ENCODE measurements at regions of chrX and their contacts with region 1.

Region 1: GRCh38 chrX:46978341-46979291 is 66.4 kb downstream of the JADE3 start:
- DNase-seq: peak; percentile 76 to 80
- H3K4me3 ChIP-seq: no peak overlapping the region
- H3K4me3 Mint-ChIP-seq: no peak overlapping the region
- H3K27ac Mint-ChIP-seq: no peak overlapping the region
- H3K4me1 ChIP-seq: peaks cover 3% of the 10 kb centered on the region; the same call in 1 of the 2 replicates
- H3K4me1 Mint-ChIP-seq: no peaks in the 10 kb centered on the region
- H3K27me3 ChIP-seq: no peaks in the 10 kb centered on the region
- H3K27me3 Mint-ChIP-seq: no peaks in the 10 kb centered on the region
- CTCF ChIP-seq: peak; percentile 63 to 70

Region 2: DNA sequence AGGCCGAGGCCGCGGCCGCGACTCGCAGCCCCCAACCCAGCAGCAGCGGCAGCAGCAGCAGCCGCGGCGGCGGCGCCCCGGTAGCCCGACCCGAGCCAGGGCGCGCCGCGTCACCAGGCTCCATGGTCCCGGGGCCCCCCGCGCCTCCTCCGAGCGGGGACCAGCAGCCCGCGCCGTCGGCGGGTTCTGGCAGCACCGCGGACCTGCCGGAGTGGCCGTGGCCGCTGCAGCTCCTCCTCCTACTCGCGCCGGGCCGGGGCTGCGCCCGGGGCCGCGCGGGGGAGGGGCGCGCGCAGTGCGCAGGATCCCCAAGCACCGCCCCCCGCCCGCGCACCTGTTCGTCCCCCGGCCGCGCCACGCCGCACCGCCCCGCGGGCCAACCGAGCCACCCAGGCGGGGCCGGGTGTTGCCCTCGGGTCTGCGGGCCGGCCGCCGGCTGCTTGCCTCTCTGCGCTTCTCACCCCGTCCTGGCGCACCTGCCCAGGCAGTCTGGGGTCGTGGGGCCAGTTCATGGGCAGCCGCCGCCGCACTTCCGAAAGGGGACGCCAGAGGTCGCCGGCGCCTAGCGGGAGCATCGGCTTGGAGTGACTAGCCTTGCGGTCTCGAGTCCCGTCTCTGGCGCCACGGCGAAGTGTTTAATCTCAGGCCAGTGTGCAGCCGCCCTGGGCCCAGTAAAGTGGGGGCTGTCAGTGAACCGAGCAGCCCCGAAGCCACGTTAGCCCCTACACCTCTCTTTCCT is 219.5 kb before region 1 on chrX and contains the start of gene SLC9A7:
- CTCF ChIA-PET with region 1: no interaction called
- POLR2A ChIA-PET with region 1: no interaction called
- intact Hi-C with region 1: loop called (anchors 5 kb)
- DNase-seq: peak; percentile 82 to 90
- H3K4me3 ChIP-seq: peak within 1 kb of the TSS; percentile 83
- H3K4me3 Mint-ChIP-seq: peak within 1 kb of the TSS; percentile 85
- H3K27ac Mint-ChIP-seq: peak within 1 kb of the TSS; percentile 83
- H3K4me1 ChIP-seq: peaks cover 9% of the 10 kb centered on the region; the same call in 1 of the 2 replicates
- H3K4me1 Mint-ChIP-seq: no peaks in the 10 kb centered on the region
- H3K27me3 ChIP-seq: no peaks in the 10 kb centered on the region
- H3K27me3 Mint-ChIP-seq: no peaks in the 10 kb centered on the region
- CTCF ChIP-seq: peak; percentile 69 to 80
- total RNA-seq, gene SLC9A7: 20.1 and 21.3 TPM in 2 replicates

Region 3: DNA sequence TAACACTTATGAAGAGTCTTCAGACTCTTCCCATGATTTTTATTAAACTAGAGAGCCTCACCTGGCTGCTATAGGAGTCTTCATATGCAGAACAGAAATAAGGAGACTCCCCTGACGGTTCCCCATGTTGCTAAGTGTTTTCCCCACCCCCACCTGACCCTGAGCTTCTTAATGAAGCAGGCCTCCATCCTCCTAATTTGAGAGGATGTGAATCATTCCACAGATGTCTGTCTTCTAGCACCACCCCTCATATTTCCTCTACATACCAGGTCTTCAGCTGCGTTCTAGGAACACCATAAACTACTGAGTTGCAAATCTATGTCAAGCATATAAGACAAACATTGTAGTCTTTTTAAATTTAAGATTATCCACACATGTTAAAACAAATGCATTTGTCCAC is 104.9 kb before region 1 on chrX:
- CTCF ChIA-PET with region 1: no interaction called
- POLR2A ChIA-PET with region 1: no interaction called
- intact Hi-C with region 1: no loop called
- DNase-seq: no peak
- H3K4me3 ChIP-seq: no peak overlapping the region
- H3K4me3 Mint-ChIP-seq: no peak overlapping the region
- H3K27ac Mint-ChIP-seq: no peak overlapping the region
- H3K4me1 ChIP-seq: no peaks in the 10 kb centered on the region
- H3K4me1 Mint-ChIP-seq: no peaks in the 10 kb centered on the region
- H3K27me3 ChIP-seq: no peaks in the 10 kb centered on the region
- H3K27me3 Mint-ChIP-seq: no peaks in the 10 kb centered on the region
- CTCF ChIP-seq: no peak

Region 4: GRCh38 chrX:46903458-46904242 is 75.0 kb before region 1 on chrX:
- CTCF ChIA-PET with region 1: interaction called, 3 read pairs
- POLR2A ChIA-PET with region 1: no interaction called
- intact Hi-C with region 1: loop called (anchors 1 kb)
- DNase-seq: peak; percentile 81 to 82
- H3K4me3 ChIP-seq: peak overlapping the region; percentile 39
- H3K4me3 Mint-ChIP-seq: peak overlapping the region; percentile 76
- H3K27ac Mint-ChIP-seq: no peak overlapping the region
- H3K4me1 ChIP-seq: peaks cover 4% of the 10 kb centered on the region; the same call in 1 of the 2 replicates
- H3K4me1 Mint-ChIP-seq: no peaks in the 10 kb centered on the region
- H3K27me3 ChIP-seq: no peaks in the 10 kb centered on the region
- H3K27me3 Mint-ChIP-seq: no peaks in the 10 kb centered on the region
- CTCF ChIP-seq: peak; percentile 43 to 87

Region 5: DNA sequence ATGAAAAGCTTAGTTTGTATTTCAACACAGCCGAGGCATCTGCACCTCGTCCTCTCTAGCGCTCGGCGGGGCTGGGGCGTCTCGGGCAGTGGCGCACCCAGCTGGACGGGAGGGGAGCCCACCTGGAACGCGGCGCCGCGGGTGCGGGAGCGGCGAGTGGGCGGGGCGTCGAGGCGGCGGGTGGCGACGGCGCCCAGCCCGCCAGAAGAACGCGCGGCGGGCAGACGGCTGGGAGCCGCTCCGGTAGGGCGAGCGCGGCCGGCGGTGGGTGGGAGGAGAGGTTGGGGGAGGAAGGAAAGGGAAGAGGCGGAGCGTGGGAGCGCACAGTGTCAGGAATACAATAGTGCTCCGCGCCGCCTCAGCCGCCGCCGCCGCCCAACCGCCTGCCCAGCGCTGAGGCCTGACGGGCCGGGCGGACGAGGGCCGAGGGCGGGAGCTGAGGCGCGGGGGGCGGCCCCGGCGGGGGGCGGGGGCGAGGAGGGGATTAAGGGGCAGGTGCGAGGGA is 66.5 kb before region 1 on chrX and contains the start of gene JADE3:
- CTCF ChIA-PET with region 1: no interaction called
- POLR2A ChIA-PET with region 1: no interaction called
- intact Hi-C with region 1: loop called (anchors 1 kb)
- DNase-seq: peak; percentile 82 to 87
- H3K4me3 ChIP-seq: peak within 1 kb of the TSS; percentile 74
- H3K4me3 Mint-ChIP-seq: peak within 1 kb of the TSS; percentile 85
- H3K27ac Mint-ChIP-seq: peak within 1 kb of the TSS; percentile 85
- H3K4me1 ChIP-seq: no peaks in the 10 kb centered on the region
- H3K4me1 Mint-ChIP-seq: no peaks in the 10 kb centered on the region
- H3K27me3 ChIP-seq: no peaks in the 10 kb centered on the region
- H3K27me3 Mint-ChIP-seq: no peaks in the 10 kb centered on the region
- CTCF ChIP-seq: peak in 1 of 2 experiments; percentile 2
- total RNA-seq, gene JADE3: 21.7 and 22.7 TPM in 2 replicates

Region 6: GRCh38 chrX:46953597-46953996 is 25.0 kb before region 1 on chrX:
- CTCF ChIA-PET with region 1: no interaction called
- POLR2A ChIA-PET with region 1: no interaction called
- intact Hi-C with region 1: loop called (anchors 1 kb)
- DNase-seq: peak; percentile 65 to 68
- H3K4me3 ChIP-seq: no peak overlapping the region
- H3K4me3 Mint-ChIP-seq: peak overlapping the region; percentile 43
- H3K27ac Mint-ChIP-seq: peak overlapping the region; percentile 83
- H3K4me1 ChIP-seq: peaks cover 31% of the 10 kb centered on the region
- H3K4me1 Mint-ChIP-seq: no peaks in the 10 kb centered on the region
- H3K27me3 ChIP-seq: no peaks in the 10 kb centered on the region
- H3K27me3 Mint-ChIP-seq: no peaks in the 10 kb centered on the region
- CTCF ChIP-seq: no peak

Region 7: DNA sequence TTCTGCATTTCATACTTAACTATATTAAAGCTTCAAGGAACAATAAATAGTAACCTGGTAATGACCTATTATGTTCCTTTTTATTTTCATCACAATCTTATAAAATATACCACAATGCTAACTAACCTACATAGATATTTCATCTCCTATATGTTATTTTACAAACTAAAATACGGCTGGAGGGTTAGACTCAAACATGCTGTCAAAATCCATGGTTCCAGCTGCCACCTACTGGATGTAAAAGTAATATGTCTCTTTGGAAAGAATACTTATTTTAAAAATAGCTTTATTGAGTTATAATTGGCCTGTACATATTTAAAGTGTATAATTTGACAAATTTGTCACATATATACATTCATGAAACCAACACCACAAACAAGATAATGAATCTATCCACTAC is 114.6 kb after region 1 on chrX:
- CTCF ChIA-PET with region 1: no interaction called
- POLR2A ChIA-PET with region 1: no interaction called
- intact Hi-C with region 1: loop called (anchors 5 kb)
- DNase-seq: peak in 1 of 2 experiments; percentile 14
- H3K4me3 ChIP-seq: no peak overlapping the region
- H3K4me3 Mint-ChIP-seq: no peak overlapping the region
- H3K27ac Mint-ChIP-seq: no peak overlapping the region
- H3K4me1 ChIP-seq: peaks cover 10% of the 10 kb centered on the region
- H3K4me1 Mint-ChIP-seq: no peaks in the 10 kb centered on the region
- H3K27me3 ChIP-seq: no peaks in the 10 kb centered on the region
- H3K27me3 Mint-ChIP-seq: no peaks in the 10 kb centered on the region
- CTCF ChIP-seq: peak in 1 of 2 experiments; percentile 49

Measured in Caco-2 (cell line).